ENCODE measurements at regions of chr12 and their contacts with region 1.

Region 1: DNA sequence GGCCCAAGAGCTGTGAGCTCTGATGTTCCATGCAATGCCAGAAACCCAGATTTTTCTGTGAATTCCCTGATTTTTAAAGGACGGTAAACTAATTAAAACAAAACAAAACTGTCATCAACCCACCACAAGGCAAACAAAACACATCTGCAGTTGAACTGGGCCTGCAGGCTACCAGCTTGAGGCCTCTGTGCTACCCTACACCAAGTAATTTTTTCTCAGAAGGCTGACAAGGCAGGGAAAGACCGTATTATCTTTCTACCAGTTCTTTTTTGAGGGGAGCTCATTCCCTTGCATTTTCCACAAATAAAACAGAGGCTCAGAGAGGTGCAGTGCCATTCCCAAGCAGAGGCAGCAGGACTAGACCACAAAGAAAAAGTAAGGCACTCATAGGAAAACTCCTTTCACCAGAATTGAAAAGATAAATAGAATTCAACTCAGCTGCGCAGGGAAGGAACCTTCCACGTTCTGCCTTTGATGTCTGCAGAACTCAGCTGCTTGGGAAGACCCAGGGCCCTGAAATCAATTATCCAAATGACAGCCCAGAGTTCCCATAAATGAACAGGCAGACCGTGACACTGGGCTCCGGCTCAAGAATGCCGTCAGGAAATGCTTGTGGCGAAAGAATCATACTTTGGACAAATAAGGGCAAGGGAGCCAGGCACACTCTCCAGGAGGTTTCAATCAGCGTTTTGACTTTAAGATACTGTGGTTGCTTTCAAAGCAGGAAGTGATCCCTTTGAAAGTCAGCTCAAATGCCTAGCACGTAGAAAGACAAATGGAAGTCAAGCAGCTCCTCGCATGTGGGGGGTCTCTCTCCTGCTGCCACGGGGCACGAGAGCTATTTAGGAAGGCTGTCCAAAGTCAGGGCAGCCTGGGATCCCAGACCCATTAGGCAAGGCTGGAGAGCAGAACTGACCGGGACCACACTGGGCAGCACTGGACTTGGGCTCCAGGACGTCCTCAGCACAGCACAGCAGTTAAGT is 14.1 kb downstream of the KCTD10 start:
- DNase-seq: no peak
- ATAC-seq: peak; percentile 75
- H3K4me3 Mint-ChIP-seq: peak overlapping the region; percentile 65
- H3K27ac Mint-ChIP-seq: peak overlapping the region; percentile 83
- H3K4me1 Mint-ChIP-seq: peaks cover 37% of the 10 kb centered on the region
- H3K27me3 Mint-ChIP-seq: no peaks in the 10 kb centered on the region

Region 2: DNA sequence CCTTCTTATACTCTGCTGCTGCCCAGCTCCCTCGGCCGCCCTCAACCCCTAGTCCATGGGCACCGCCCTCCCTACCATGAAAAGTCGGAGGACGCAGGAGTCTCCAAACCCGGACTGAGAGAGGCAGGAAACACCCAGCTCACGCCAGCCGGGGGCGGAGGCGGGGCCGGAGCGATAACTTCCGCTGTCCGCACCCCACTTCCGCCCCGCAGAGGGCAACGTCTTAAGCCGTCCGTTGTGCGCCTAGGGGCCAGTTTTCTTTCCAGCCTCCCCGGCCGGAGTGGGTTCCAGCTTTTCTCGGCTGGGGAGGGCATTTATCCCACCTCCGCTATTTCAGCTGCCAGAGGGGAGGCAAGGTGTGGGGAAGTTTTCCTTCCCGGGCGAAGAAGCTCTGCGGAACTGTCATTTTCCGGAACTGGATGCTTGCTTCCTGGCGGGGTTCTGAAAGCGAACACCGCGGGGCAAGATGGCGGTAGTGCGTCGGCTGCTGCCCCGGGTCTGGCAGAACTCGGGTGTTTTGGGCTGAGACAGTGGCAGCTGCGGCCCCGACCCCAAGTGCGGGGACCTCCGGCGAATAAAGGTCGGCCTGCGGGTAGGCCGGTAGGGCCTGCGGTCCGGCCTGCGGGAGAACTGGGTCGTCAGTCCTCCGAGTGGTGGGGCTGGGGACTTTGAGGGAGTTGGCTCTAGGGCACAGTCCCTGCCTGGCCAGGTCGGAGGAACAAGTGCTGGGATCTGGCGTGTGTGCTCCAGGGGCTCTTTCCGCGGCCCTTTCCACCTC is 14.4 kb after region 1 on chr12 and contains the starts of genes KCTD10 and UBE3B:
- POLR2A ChIA-PET with region 1: interaction called, 12 read pairs
- DNase-seq: peak; percentile 91
- ATAC-seq: peak; percentile 90
- H3K4me3 Mint-ChIP-seq: peak within 1 kb of the TSS; percentile 92
- H3K27ac Mint-ChIP-seq: peak within 1 kb of the TSS; percentile 98
- H3K4me1 Mint-ChIP-seq: peaks cover 28% of the 10 kb centered on the region
- H3K27me3 Mint-ChIP-seq: no peaks in the 10 kb centered on the region
- total RNA-seq, gene KCTD10: 34.8 to 39.8 TPM
- total RNA-seq, gene UBE3B: 40.0 to 41.7 TPM